ENCODE measurements at regions of chr2 and their contacts with region 1.

Region 1: DNA sequence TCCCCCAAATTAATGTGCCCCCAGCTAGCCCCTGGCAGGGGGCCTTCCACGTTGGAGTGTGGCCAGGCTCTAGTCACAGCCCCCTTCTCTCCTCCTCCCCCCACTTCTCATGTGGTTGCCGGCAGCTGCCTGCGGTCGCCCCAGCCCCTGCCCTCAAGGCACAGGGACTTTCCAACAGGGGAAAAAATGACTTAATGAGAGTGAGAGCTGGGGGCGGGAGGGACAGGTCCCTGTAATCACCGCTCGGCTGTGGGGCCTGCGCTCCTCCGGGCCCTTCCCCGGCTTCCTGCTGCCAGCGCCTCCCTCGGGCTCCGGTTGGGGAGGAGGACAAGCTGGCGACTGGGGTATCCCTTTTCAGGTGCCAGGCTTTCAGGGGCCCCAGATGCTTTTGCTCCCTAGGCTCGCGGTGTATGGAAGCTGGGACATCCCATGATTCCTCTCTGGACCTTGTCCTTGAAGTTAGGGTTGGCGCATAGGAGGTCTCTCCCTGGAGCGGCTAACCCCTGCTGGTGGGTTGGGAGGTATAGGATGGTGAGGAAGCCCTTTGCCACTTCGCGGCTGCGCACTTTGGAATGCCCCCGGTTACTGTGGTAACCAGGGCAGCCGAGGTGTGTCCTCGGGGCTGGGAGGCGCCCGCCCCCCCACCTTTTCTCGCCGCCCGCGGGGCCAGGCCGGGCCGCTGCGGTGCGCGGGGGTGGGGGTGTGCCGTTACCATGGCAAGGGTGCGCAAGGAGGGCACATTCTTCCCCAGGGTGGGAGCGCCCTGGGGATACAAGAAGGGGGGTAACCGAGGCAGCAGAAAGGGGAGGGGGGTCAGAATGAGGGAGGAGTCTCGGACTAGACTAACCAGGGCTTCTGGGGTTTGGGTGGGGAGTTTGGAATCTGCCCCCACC is 16.1 kb downstream of the WNT10A start:
- DNase-seq: no peak

Region 2: DNA sequence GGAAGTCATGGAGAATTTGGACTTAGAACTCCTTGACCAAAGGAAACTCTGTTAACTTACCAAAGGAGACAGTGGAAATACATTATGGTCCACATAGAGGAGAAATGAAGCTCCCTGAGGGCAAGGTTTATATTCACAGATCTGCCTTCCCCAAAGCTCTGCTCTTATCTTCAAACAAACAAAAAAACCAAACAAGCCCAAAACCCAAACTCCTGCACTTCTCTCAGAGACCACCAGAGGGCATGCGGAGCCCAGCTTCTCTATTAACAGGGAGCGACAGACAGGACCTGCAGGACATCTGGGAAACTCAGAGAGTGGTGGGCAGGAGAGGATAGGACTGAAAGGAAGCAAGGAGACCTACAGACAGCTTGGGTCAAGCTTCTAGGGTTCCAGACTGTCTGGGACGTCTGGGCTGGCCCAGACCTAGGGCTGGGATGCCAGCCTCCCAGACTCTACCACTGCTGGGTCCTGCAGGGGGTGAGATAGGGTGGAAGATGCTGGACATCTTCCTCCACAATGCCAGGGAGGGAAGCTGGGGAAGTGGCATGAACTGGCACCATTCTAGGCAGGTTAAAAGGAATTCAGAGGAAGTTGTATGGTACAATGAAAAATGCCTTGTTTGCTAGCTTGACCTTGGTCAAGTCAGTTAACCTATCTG is 20.1 kb before region 1 on chr2:
- intact Hi-C with region 1: loop called (anchors 2 kb)
- DNase-seq: no peak

Region 3: DNA sequence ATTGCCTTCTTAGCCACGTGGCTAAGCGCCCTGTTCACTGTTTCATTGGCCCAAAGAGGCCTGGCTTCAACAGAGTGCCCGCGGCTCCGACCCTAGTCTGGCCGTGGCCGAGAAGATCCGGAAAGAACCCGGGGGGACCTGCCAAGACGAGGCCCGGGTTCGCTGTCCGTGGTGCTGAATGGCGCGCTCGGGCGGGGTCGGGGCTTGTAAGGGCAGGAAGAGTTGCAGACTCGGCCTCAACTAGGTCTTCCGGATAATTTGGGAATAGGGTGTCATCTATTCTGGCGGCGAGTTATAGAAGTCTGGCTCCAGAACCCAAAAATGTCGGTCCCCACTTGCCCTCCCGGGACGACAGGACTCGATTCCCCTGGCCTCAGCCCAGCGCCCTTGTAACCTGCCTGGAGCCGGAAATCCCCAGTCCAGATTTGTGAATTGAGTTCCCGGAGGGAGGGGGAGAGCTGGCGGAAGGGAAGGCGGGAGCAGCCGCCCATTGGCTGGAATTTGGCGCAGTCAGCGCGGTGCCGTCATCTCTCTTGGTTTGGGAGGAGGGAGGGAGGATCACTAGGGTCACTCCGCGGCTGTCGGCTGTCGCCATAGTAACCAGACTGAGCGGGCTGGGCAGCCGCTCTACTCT is 66.2 kb after region 1 on chr2:
- intact Hi-C with region 1: no loop called
- DNase-seq: peak; percentile 77

Region 4: DNA sequence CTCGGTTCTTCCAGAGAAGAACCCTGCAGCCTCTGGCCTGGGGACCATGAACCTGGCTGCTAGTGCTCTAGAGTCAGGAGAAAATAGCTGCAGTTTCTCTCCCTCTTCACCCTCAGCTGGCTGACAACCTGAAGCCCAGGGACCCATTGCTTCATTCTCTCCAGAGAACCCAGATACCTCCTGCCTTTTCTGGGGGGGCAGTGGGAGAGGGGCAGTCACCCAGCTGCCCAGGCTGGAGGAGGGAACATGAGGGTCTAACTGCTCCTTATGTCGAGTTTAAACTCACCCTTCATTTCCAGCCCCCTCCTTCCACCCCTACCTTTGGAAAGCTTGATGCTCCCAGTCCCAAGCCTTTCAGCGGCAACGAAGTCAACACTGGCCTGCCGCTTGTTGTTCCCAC is 302.2 kb after region 1 on chr2:
- intact Hi-C with region 1: no loop called
- DNase-seq: no peak